CD8-positive, alpha-beta memory T cell (primary cell): ENCODE measurements at regions of chr5 and their contacts with region 1.

Region 1: GRCh38 chr5:180860887-180861822 is at the start of gene ZFP62:
- DNase-seq: peak; percentile 77 to 90 (median 86)
- H3K4me3 ChIP-seq: peak within 1 kb of the TSS; percentile 93
- H3K4me3 Mint-ChIP-seq: peak within 1 kb of the TSS; percentile 89 to 98 (median 94)
- H3K27ac ChIP-seq: peak within 1 kb of the TSS; percentile 86
- H3K27ac Mint-ChIP-seq: peak within 1 kb of the TSS; percentile 85 to 99 (median 94)
- H3K4me1 ChIP-seq: peaks cover 12% of the 10 kb centered on the region
- H3K4me1 Mint-ChIP-seq: peaks cover 16 to 29% (median 25%) of the 10 kb centered on the region in 3 donors
- H3K27me3 ChIP-seq: no peaks in the 10 kb centered on the region
- H3K27me3 Mint-ChIP-seq: peaks cover 4 to 5% of the 10 kb centered on the region in 2 donors
- total RNA-seq, gene ZFP62: 27.6 to 34.1 TPM

Region 2: DNA sequence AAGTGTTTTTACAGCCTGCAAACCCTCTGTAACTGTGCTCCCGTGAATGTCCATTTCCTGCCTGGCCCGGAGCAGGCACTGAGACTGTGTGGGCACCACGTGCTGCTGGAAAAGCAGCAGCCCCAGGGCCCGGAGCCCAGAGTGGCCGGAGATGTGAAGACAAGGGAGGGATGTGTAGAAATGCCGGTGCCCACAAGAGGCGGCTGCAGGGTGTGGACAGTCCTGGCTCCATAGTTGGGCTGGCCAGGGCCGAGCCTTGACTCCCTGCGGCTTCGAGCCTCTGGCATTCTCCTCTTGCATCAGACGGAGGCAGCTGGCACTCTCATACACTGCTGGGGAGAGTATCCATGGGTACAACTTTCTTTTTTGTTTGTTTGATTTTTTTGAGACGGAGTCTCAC is 494.8 kb before region 1 on chr5:
- CTCF ChIA-PET with region 1: no interaction called
- POLR2A ChIA-PET with region 1: no interaction called
- DNase-seq: no peak
- H3K4me3 ChIP-seq: no peak overlapping the region
- H3K4me3 Mint-ChIP-seq: peak overlapping the region in 2 of 7 donors; percentile 27 to 65
- H3K27ac ChIP-seq: no peak overlapping the region
- H3K27ac Mint-ChIP-seq: peak overlapping the region in 2 of 8 donors; percentile 7 to 78
- H3K4me1 ChIP-seq: peaks cover 20% of the 10 kb centered on the region
- H3K4me1 Mint-ChIP-seq: peaks cover 8 to 30% (median 21%) of the 10 kb centered on the region in 3 donors
- H3K27me3 ChIP-seq: no peaks in the 10 kb centered on the region
- H3K27me3 Mint-ChIP-seq: peaks cover 3% of the 10 kb centered on the region in 2 donors

Region 3: GRCh38 chr5:180704368-180704869 is 156.7 kb before region 1 on chr5:
- CTCF ChIA-PET with region 1: no interaction called
- POLR2A ChIA-PET with region 1: no interaction called
- DNase-seq: no peak
- H3K4me3 ChIP-seq: no peak overlapping the region
- H3K4me3 Mint-ChIP-seq: no peak overlapping the region
- H3K27ac ChIP-seq: no peak overlapping the region
- H3K27ac Mint-ChIP-seq: no peak overlapping the region
- H3K4me1 ChIP-seq: no peaks in the 10 kb centered on the region
- H3K4me1 Mint-ChIP-seq: no peaks in the 10 kb centered on the region
- H3K27me3 ChIP-seq: no peaks in the 10 kb centered on the region
- H3K27me3 Mint-ChIP-seq: peaks cover 3 to 24% of the 10 kb centered on the region in 2 donors

Region 4: GRCh38 chr5:180810210-180810958 is 50.8 kb before region 1 on chr5:
- CTCF ChIA-PET with region 1: interaction called, 4 read pairs
- POLR2A ChIA-PET with region 1: interaction called, 14 read pairs
- DNase-seq: peak; percentile 94 to 98 (median 97)
- H3K4me3 ChIP-seq: peak overlapping the region; percentile 87
- H3K4me3 Mint-ChIP-seq: peak overlapping the region; percentile 82 to 99 (median 89)
- H3K27ac ChIP-seq: peak overlapping the region; percentile 93
- H3K27ac Mint-ChIP-seq: peak overlapping the region; percentile 93 to 100 (median 98)
- H3K4me1 ChIP-seq: peaks cover 58% of the 10 kb centered on the region
- H3K4me1 Mint-ChIP-seq: peaks cover 67 to 74% (median 68%) of the 10 kb centered on the region in 3 donors
- H3K27me3 ChIP-seq: no peaks in the 10 kb centered on the region
- H3K27me3 Mint-ChIP-seq: no peaks in the 10 kb centered on the region

Region 5: DNA sequence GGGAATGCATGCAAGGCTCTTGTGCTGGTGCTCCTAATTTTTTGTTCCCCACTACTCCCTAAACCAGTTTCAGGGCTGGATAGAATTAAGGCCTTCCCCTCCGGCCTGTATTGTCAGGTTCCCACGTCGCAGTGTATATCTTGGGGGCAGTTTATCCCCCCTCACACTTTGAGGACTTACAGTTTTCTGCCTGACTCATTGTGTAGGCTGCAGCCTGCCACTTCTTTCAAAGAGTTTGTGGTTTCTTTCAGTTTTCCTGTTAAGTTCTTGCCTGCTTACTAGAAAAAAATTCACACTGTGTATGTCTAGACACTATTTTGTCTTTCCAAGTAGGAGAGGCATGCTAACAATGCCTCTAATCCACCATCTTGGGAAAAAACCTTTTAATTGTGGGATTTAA is 99.1 kb after region 1 on chr5:
- CTCF ChIA-PET with region 1: no interaction called
- POLR2A ChIA-PET with region 1: no interaction called
- DNase-seq: no peak
- H3K4me3 ChIP-seq: no peak overlapping the region
- H3K4me3 Mint-ChIP-seq: no peak overlapping the region
- H3K27ac ChIP-seq: no peak overlapping the region
- H3K27ac Mint-ChIP-seq: no peak overlapping the region
- H3K4me1 ChIP-seq: peaks cover 9% of the 10 kb centered on the region
- H3K4me1 Mint-ChIP-seq: peaks cover 4 to 9% (median 8%) of the 10 kb centered on the region in 3 donors
- H3K27me3 ChIP-seq: no peaks in the 10 kb centered on the region
- H3K27me3 Mint-ChIP-seq: peaks cover 15 to 65% of the 10 kb centered on the region in 2 donors